ENCODE measurements at regions of chr14 and their contacts with region 1.

Region 1: DNA sequence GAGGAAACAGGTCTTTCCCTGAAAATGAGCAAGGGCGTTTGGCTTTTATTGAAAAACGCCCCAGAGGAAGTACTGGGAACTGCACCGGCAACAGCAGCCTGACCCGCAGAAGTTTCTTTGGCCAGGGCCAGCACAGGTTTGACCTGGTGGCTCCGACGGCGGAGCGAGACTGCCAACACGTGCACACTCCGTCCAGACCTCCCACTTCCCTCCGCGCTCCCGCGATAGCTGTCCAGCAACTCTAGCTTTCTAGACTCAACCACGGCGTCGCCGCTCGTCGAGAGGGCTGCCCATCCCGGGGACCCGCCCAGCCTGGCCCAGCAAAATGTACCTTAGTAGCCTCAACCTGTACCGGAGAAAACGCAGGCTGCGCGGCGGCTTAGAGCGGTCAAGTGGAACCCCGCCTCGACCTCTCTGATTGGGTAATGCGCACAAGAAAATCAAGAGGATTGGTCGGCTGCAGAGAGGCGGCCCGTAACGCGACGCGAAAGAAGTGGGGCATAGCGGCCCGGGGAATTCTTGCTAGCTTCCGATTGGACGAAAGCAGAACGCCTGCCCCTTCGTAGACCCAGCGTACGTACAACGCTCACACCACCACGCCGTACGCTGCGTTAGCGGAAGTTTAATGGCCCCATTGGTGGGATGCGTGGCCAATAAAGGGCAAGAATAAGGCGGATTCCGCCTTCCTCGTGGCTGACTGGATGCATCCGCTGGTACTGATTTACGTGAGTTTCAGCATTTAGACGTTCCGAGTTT is at the start of gene WDR89:
- DNase-seq: peak; percentile 98
- ATAC-seq: peak; percentile 91
- H3K4me3 ChIP-seq: peak within 1 kb of the TSS; percentile 75 to 86
- H3K27ac ChIP-seq: peak within 1 kb of the TSS; percentile 92
- H3K4me1 ChIP-seq: peaks cover 0 to 17% of the 10 kb centered on the region in 2 experiments; a peak in 2 of 4 replicates
- H3K27me3 ChIP-seq: no peaks in the 10 kb centered on the region
- CTCF ChIP-seq: peak; percentile 17 to 80 (median 76); a peak in 4 of 6 replicates
- POLR2A ChIP-seq: no peak
- RAD21 ChIP-seq: peak; percentile 44
- total RNA-seq, gene WDR89: 22.8 TPM

Region 2: DNA sequence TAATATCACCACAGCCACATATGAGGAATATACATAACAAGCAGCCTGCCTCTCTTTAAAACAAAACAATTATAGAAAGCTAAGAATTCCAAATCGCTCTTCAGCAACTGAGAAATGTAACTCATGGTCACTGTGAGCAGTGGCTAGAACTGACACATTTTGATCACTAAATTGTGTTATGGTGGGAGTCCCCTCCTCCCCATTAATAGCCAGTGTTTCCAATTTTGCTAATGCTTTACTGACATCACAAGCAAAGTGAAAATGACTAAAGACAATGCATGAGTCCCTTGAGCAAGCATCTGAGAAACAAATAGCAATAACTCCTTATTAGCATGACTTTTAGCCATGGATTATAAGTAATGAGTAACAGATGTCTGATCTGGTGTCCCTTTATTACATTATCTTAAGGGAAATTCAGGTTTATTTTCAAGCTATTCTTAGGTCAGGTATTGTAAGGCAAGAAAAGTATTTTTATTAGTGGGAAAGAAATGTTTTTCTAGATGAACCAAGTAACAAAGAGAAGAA is 744.7 kb before region 1 on chr14:
- CTCF ChIA-PET with region 1: no interaction called
- POLR2A ChIA-PET with region 1: no interaction called
- RAD21 ChIA-PET with region 1: no interaction called
- intact Hi-C with region 1: no loop called
- DNase-seq: no peak
- ATAC-seq: no peak
- H3K4me3 ChIP-seq: no peak overlapping the region
- H3K27ac ChIP-seq: no peak overlapping the region
- H3K4me1 ChIP-seq: no peaks in the 10 kb centered on the region
- H3K27me3 ChIP-seq: no peaks in the 10 kb centered on the region
- CTCF ChIP-seq: no peak
- POLR2A ChIP-seq: no peak
- RAD21 ChIP-seq: no peak

Region 3: DNA sequence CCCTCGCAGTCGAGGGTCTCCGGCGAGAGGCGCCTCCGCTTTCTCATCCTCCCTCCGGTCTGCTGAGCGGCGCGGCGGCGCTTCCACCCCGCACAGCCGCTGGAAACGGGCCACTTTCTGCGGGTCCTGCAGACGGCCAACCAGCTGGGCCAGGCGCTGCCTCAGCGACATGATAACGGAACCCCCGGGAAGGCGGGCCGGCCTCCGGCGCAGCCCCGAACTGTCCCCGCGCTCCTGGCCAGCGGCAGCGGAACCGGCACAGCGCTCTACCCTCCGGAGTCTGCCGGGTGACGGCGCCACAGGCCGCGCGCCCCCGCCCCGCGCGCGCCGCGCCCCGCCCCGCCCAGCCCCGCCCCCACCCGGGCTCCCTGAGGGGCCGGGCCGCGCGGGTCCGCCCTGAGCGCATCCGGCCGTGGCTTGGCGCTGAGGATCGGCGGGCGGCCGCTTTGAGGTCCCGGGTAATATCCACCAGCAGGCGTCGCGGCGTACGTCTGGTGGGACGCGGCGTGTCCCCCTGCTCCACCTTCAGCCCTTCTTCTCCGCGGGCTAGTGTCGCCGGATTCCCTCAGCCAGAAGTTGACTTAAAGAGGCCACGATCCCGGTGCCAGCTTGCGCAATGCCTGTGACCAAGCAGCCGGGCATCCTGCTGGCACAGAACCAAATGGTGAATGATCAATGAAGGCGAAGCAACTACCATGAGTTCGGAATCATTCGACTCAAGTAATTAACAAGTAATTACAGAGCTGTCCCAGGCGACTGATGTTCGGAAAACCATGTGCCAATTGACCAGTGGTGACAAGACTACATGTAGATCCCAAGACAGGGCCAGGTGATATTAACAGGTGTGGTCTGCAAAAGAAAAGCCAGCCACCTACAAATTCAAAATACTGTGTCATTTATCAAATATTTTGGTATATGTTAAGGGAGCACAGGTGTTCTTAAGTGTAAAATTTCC is 86.4 kb after region 1 on chr14 and contains the start of gene SGPP1:
- CTCF ChIA-PET with region 1: no interaction called
- POLR2A ChIA-PET with region 1: no interaction called
- RAD21 ChIA-PET with region 1: interaction called in 1 of 2 experiments, 3 read pairs
- intact Hi-C with region 1: loop called (anchors 5 kb)
- DNase-seq: peak; percentile 76
- ATAC-seq: peak; percentile 90
- H3K4me3 ChIP-seq: peak within 1 kb of the TSS; percentile 63 to 96
- H3K27ac ChIP-seq: peak within 1 kb of the TSS; percentile 88
- H3K4me1 ChIP-seq: peaks cover 14 to 25% of the 10 kb centered on the region in 2 experiments; a peak in 3 of 4 replicates
- H3K27me3 ChIP-seq: no peaks in the 10 kb centered on the region
- CTCF ChIP-seq: peak in 1 of 3 experiments; percentile 20; a peak in 2 of 6 replicates
- POLR2A ChIP-seq: peak; percentile 32
- RAD21 ChIP-seq: no peak
- total RNA-seq, gene SGPP1: 17.7 TPM

Region 4: DNA sequence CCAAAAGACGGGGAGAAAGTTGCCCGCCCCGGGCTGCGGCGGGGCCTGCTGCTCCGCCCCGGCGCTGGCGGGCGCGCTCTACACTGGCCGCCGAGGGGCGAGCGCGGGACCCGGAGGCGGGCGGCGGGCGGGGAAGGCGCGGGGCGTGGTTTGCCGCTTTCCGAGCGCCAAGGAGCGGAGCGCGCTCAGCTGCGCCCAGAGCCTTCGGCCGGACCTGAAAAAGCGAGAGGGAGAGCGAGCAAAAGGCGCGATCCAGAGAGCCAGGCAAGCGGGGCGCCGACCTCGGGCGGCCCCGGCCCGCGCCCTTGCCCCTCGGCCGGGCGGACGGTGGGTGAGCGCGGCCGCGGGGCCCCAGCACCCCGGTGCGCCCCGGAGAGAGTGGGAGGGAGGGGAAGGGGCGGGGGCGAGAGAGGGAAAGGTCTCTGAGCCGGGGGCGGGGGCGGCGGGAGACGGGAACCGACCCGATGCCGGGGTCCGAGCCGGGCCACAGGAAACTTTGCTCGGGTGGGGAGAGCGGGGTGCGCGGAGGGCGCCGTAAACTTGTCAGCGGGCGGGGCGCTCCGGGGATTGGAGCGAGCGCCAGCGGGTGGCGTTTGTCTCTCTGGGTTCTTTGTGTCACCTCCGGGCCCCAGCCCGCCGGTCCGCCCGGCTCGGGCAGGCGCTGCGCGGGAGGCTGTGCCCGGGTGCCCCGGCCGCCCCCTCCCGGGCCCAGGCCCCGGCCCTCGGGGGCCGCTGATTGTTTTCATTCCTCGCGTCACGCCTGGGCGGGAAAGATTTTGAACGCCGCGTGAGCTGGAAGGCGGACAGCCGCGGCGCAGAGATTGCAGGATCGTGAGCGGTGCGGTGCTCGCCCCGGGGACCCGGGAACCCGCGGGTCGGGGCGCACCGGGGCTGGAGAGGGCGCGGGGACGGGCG is 211.4 kb after region 1 on chr14 and contains the start of gene SYNE2:
- CTCF ChIA-PET with region 1: no interaction called
- POLR2A ChIA-PET with region 1: no interaction called
- RAD21 ChIA-PET with region 1: no interaction called
- intact Hi-C with region 1: loop called (anchors 5 kb)
- DNase-seq: no peak
- ATAC-seq: peak; percentile 90
- H3K4me3 ChIP-seq: peak within 1 kb of the TSS; percentile 53 to 74
- H3K27ac ChIP-seq: peak within 1 kb of the TSS; percentile 69
- H3K4me1 ChIP-seq: peaks cover 3 to 26% of the 10 kb centered on the region in 2 experiments; a peak in 3 of 4 replicates
- H3K27me3 ChIP-seq: no peaks in the 10 kb centered on the region
- CTCF ChIP-seq: no peak
- POLR2A ChIP-seq: no peak
- RAD21 ChIP-seq: no peak; the same call in 1 of the 2 replicates
- total RNA-seq, gene SYNE2: 28.8 TPM

Measured in HCT116 (cell line).